KBM-7 (cell line): ENCODE measurements at regions of chr5 and their contacts with region 1.

Region 1: GRCh38 chr5:150560401-150561193 is 52.7 kb downstream of the NDST1 start:
- DNase-seq: peak; percentile 85

Region 2: GRCh38 chr5:150656191-150657132 is 95.9 kb after region 1 on chr5:
- in situ Hi-C with region 1: loop called (anchors 10 kb)
- DNase-seq: peak; percentile 88